ENCODE measurements at regions of chr17 and their contacts with region 1.

Region 1: GRCh38 chr17:81020767-81021497 is 14.0 kb upstream of the BAIAP2 start:
- DNase-seq: peak; percentile 69 to 82
- ATAC-seq: peak; percentile 71 to 86 (median 80)
- H3K4me3 ChIP-seq: no peak overlapping the region
- H3K27ac ChIP-seq: peak overlapping the region; percentile 83
- H3K4me1 ChIP-seq: peaks cover 42% of the 10 kb centered on the region
- H3K27me3 ChIP-seq: peaks cover 0 to 4% (median 3%) of the 10 kb centered on the region in 3 donors
- CTCF ChIP-seq: no peak

Region 2: DNA sequence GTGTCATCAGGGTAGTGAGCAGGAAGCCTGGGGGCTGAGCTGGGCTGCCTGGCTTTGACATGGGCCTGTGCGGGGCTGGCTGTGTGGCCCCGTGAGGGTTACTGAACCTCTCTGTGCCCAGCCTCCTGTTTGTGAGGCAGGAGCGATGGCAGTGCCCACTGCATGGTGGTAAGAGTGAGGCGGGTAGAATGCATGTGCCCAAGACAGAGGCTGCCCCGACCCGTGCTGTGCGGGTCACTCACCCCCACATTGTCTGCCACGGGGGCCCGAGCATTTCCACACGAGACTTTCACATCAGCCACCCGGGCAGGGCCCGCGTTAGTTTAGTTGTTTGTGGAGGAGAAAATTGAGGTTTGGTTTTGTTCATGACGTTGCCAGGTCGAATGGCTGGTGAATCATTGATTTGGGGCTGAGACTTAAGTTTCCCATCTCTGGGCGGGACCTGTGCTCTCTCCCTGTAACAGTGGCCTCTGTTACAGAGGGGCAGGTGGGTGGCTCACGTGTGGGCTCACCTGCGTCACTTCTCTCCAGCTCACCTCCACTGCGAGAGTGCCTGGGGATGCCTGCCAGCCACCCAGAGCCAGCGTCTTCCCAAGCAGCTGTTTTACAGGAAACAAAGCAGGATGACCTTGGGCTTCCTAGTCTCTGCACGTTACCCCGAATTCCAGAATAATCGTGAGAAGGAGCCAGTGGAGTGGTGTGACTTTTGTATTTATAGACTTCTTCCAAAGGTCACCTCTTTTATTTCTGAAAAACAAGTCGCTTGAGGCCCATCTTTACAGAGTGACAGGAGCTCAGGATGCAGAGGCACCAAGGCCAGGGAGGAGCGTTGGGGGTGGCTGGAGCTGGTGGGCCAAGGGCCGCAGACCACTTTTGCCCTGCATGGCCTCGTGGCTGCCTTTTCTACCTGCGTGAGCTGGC is 325.7 kb before region 1 on chr17:
- intact Hi-C with region 1: no loop called
- DNase-seq: no peak
- ATAC-seq: peak in 2 of 4 donors; percentile 19 to 26
- H3K4me3 ChIP-seq: no peak overlapping the region
- H3K27ac ChIP-seq: no peak overlapping the region
- H3K4me1 ChIP-seq: peaks cover 17% of the 10 kb centered on the region
- H3K27me3 ChIP-seq: no peaks in the 10 kb centered on the region
- CTCF ChIP-seq: no peak

Region 3: DNA sequence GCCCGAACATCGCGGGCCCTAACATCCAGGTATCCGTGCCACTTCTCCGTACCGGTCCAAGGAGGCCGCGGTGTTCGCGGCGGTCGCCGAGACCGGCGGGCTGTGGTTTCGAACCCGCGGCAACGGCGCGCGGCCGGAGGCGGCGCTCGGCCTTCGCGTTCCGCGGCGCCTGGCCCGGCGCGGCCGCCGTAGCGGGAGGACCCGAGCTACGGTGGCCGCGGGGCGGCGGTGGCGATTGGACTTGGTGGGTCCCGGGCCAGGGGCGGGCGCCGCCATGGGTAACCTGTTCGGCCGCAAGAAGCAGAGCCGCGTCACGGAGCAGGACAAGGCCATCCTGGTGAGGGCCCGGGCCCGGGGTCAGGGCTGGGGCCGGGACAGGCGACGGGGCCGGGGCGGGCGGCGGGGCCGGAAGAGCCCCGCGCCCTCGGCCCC is 29.3 kb before region 1 on chr17 and contains the start of gene CHMP6:
- intact Hi-C with region 1: no loop called
- DNase-seq: peak; percentile 85 to 90
- ATAC-seq: peak; percentile 75 to 80 (median 78)
- H3K4me3 ChIP-seq: peak within 1 kb of the TSS; percentile 89
- H3K27ac ChIP-seq: peak within 1 kb of the TSS; percentile 85
- H3K4me1 ChIP-seq: peaks cover 17% of the 10 kb centered on the region
- H3K27me3 ChIP-seq: no peaks in the 10 kb centered on the region
- CTCF ChIP-seq: peak; percentile 29
- total RNA-seq, gene CHMP6: 32.0 to 36.9 (median 33.6) TPM

Region 4: DNA sequence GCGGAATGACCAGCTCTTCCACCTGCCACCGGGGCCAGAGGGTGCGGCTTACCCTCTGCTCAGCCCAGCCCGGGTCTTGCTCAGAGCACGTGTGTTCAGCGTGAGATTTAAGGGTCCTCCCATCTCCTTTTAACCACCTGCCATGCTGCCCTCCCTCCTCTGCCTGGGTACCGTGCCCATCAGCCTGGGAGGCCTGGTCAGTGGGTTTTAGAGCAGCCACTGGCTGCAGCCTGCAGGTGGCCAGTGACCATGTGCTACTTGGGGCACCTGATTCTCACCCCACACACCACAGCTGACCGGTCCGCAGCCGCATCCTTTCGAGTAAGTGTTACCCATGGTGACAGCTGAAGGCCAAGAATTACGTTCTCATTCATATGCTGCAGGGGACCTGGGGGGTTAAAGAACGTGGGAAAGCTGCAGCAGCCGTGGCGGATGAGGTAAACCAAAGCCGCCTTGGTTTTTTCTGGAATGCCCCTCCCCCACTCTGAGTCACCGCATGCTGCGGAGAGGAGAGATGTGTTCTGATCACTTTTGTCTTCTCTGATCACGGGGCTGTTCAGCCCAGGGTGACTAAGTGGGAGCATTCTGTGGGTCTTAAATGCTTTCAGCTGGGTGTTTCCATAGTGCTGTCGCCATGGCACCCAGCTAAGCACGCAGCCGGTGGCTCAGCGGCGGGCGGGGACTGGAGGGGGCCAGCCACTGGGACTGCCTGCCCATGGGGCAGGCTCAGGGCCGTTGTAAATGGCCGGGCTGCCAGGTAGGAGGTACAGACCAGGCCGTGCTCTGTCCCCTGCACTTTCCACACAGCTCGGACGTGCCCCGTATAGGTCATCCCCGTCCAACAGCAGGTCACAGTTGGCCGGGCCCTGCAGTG is 73.8 kb after region 1 on chr17:
- intact Hi-C with region 1: loop called in 1 of 2 experiments (anchors 2 kb)
- DNase-seq: peak; percentile 78 to 81
- ATAC-seq: peak; percentile 42 to 72 (median 65)
- H3K4me3 ChIP-seq: no peak overlapping the region
- H3K27ac ChIP-seq: peak overlapping the region; percentile 53
- H3K4me1 ChIP-seq: peaks cover 28% of the 10 kb centered on the region
- H3K27me3 ChIP-seq: peaks cover 0 to 8% (median 0%) of the 10 kb centered on the region in 3 donors
- CTCF ChIP-seq: no peak

Region 5: DNA sequence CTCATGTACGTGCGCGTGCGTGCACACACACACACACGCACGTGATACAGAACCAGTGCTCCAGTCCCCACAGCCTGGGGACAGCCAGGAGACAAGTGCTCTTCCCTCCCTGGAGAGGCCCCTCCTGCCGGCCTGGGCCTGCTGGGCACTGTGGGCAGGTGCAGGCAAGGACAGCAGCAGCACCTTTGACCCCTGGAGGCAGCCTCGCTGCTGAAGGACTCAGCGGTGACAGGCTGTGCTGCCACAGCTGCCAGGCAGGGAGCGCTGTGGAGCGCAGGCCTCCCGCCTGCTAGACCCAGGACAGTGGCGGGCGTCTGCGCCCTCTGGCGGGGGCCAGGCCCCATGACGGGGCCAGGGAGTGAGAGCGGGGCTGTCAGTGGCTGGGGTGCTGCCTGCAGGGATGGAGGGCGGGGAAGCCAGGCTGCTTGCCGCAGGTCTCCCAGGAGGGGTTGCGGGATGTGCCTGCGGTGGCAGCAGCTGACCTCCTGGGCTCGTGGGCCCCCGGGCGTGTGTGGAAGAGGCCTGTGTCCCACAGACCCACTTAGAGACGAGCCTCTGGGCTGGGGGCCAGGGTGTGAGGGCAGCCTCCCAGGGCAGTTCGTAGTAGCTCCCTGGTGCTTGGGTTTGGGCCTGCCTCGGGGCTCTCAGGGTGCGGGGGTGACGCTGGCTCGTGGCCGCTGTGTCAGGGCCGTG is 80.8 kb after region 1 on chr17:
- intact Hi-C with region 1: loop called (anchors 2 kb)
- DNase-seq: peak; percentile 81 to 91
- ATAC-seq: peak; percentile 90 to 95 (median 92)
- H3K4me3 ChIP-seq: no peak overlapping the region
- H3K27ac ChIP-seq: no peak overlapping the region
- H3K4me1 ChIP-seq: peaks cover 10% of the 10 kb centered on the region
- H3K27me3 ChIP-seq: no peaks in the 10 kb centered on the region
- CTCF ChIP-seq: peak; percentile 100

Region 6: GRCh38 chr17:81241648-81242420 is 220.9 kb after region 1 on chr17:
- intact Hi-C with region 1: loop called in 1 of 2 experiments (anchors 10 kb)
- DNase-seq: peak; percentile 62 to 84
- ATAC-seq: peak in 3 of 4 donors; percentile 16 to 41 (median 36)
- H3K4me3 ChIP-seq: no peak overlapping the region
- H3K27ac ChIP-seq: no peak overlapping the region
- H3K4me1 ChIP-seq: peaks cover 20% of the 10 kb centered on the region
- H3K27me3 ChIP-seq: no peaks in the 10 kb centered on the region
- CTCF ChIP-seq: peak; percentile 77

Region 7: GRCh38 chr17:81255019-81255717 is 234.2 kb after region 1 on chr17:
- intact Hi-C with region 1: no loop called
- DNase-seq: peak; percentile 88 to 95
- ATAC-seq: peak; percentile 90 to 93 (median 91)
- H3K4me3 ChIP-seq: peak overlapping the region; percentile 35
- H3K27ac ChIP-seq: peak overlapping the region; percentile 74
- H3K4me1 ChIP-seq: peaks cover 18% of the 10 kb centered on the region
- H3K27me3 ChIP-seq: no peaks in the 10 kb centered on the region
- CTCF ChIP-seq: peak; percentile 46